K562 (cell line): ENCODE measurements at regions of chr21 and their contacts with region 1.

Region 1: GRCh38 chr21:45287438-45288391 is at the start of gene POFUT2:
- DNase-seq: peak; percentile 98 to 100 (median 100)
- ATAC-seq: peak; percentile 89
- H3K4me3 ChIP-seq: peak within 1 kb of the TSS; percentile 92
- H3K27ac ChIP-seq: peak within 1 kb of the TSS; percentile 68; the same call in 2 of the 3 replicates
- H3K4me1 ChIP-seq: peaks cover 12 to 36% of the 10 kb centered on the region in 2 experiments; a peak in 4 of 5 replicates
- H3K27me3 ChIP-seq: no peaks in the 10 kb centered on the region
- CTCF ChIP-seq: peak in 1 of 3 experiments; percentile 8; a peak in 1 of 6 replicates
- EP300 ChIP-seq: no peak
- POLR2A ChIP-seq: peak; percentile 83
- RAD21 ChIP-seq: no peak
- polyA plus RNA-seq, gene POFUT2: 1.1 to 2.9 TPM

Region 2: GRCh38 chr21:44865561-44866280 is 422.0 kb before region 1 on chr21:
- CTCF ChIA-PET with region 1: no interaction called
- POLR2A ChIA-PET with region 1: no interaction called
- in situ Hi-C with region 1: no loop called
- intact Hi-C with region 1: no loop called
- DNase-seq: no peak
- ATAC-seq: no peak
- H3K4me3 ChIP-seq: no peak overlapping the region
- H3K27ac ChIP-seq: no peak overlapping the region; the same call in 2 of the 3 replicates
- H3K4me1 ChIP-seq: peaks cover 31 to 41% of the 10 kb centered on the region in 2 experiments
- H3K27me3 ChIP-seq: no peaks in the 10 kb centered on the region
- CTCF ChIP-seq: no peak
- EP300 ChIP-seq: no peak
- POLR2A ChIP-seq: no peak
- RAD21 ChIP-seq: no peak

Region 3: DNA sequence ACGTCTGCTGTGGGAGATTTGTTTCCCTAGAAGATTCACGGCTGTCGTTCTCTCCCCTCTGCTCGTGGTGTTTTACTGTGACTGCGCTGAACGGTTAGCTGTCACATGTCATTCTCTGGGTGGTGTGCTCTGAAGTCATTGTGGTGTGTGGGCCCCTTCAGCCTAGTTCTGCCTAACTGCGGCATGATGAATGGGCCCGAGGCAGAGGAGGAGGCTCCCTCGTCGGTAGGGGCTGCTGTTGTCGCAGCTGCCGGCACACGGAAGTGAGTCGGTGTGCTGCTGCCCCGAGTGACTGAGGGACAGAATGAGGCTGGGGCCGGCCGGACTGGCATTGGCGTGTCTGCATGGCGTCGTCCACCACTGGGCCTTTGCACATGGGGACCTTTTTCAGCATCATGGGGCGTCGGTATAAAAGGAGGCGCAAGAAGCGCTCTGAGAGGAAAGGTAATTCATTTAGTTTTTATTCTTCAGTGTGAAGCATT is 135.4 kb before region 1 on chr21:
- CTCF ChIA-PET with region 1: no interaction called
- POLR2A ChIA-PET with region 1: no interaction called
- in situ Hi-C with region 1: loop called (anchors 5 kb)
- intact Hi-C with region 1: loop called (anchors 1 kb)
- DNase-seq: peak; percentile 75 to 92 (median 84)
- ATAC-seq: peak; percentile 99
- H3K4me3 ChIP-seq: no peak overlapping the region; the same call in 1 of the 2 replicates
- H3K27ac ChIP-seq: peak overlapping the region; percentile 30; the same call in 1 of the 3 replicates
- H3K4me1 ChIP-seq: peaks cover 15 to 22% of the 10 kb centered on the region in 2 experiments; a peak in 4 of 5 replicates
- H3K27me3 ChIP-seq: no peaks in the 10 kb centered on the region
- CTCF ChIP-seq: peak; percentile 97
- EP300 ChIP-seq: peak; percentile 55; the same call in 1 of the 2 replicates
- POLR2A ChIP-seq: peak; percentile 44; the same call in 1 of the 2 replicates
- RAD21 ChIP-seq: peak; percentile 90 to 97

Region 4: DNA sequence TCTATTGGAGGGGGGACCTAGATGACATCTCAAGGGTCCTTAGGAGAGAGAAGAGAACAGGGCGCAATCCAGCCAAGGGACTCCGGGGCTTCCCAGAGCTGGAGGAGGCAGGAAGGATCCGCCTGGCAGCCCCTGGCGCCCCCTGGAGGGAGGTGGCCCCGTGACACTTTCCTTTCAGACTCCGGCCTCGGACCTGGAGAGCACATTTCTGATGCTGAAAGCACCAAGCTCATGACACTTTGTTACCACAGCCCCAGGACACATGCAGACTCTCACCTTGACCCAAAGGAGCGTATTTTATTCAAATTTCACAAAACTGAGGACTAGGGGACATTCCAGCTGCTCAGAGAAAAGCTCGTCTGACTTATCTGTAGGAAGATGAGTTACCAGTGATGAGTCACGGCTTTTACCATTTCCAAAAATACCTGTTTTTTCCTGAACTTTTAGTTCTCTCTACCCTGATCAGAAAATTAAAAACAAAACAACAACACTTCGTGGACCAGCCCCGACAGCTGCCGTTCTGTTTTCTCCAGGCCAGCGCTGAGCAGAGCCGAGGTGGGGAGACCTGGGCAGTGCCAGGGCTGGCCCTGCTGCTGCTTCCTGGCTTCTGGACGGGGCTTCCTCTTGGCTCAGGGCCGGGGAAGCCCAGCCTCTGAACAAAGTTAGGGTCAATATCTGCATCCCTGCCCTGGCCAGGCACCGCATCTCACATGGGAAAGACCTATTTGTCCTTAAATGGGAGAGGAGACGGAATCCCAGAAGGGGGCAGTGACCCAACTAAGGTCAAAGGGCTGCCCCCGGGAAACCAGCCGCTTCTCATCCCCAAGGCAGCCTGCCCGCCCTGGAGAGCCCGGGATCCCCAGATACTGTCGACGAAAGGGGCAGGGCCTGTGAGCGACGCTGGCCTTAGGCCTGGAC is 21.6 kb after region 1 on chr21:
- CTCF ChIA-PET with region 1: interaction called, 3 read pairs
- POLR2A ChIA-PET with region 1: no interaction called
- in situ Hi-C with region 1: no loop called
- intact Hi-C with region 1: loop called (anchors 1 kb)
- DNase-seq: peak; percentile 78 to 82 (median 81)
- ATAC-seq: peak; percentile 89
- H3K4me3 ChIP-seq: no peak overlapping the region
- H3K27ac ChIP-seq: no peak overlapping the region
- H3K4me1 ChIP-seq: peaks cover 20 to 32% of the 10 kb centered on the region in 2 experiments; a peak in 4 of 5 replicates
- H3K27me3 ChIP-seq: peaks cover 13 to 66% of the 10 kb centered on the region in 2 experiments; a peak in 4 of 5 replicates
- CTCF ChIP-seq: peak; percentile 87 to 99 (median 90)
- EP300 ChIP-seq: no peak
- POLR2A ChIP-seq: no peak
- RAD21 ChIP-seq: peak; percentile 45 to 80

Region 5: GRCh38 chr21:45347712-45348499 is 60.2 kb after region 1 on chr21:
- CTCF ChIA-PET with region 1: no interaction called
- POLR2A ChIA-PET with region 1: no interaction called
- in situ Hi-C with region 1: no loop called
- intact Hi-C with region 1: no loop called
- DNase-seq: no peak
- ATAC-seq: no peak
- H3K4me3 ChIP-seq: no peak overlapping the region
- H3K27ac ChIP-seq: no peak overlapping the region
- H3K4me1 ChIP-seq: peaks cover 0 to 49% of the 10 kb centered on the region in 2 experiments; a peak in 3 of 5 replicates
- H3K27me3 ChIP-seq: peaks cover 33 to 64% of the 10 kb centered on the region in 2 experiments
- CTCF ChIP-seq: no peak
- EP300 ChIP-seq: no peak
- POLR2A ChIP-seq: no peak
- RAD21 ChIP-seq: no peak

Region 6: DNA sequence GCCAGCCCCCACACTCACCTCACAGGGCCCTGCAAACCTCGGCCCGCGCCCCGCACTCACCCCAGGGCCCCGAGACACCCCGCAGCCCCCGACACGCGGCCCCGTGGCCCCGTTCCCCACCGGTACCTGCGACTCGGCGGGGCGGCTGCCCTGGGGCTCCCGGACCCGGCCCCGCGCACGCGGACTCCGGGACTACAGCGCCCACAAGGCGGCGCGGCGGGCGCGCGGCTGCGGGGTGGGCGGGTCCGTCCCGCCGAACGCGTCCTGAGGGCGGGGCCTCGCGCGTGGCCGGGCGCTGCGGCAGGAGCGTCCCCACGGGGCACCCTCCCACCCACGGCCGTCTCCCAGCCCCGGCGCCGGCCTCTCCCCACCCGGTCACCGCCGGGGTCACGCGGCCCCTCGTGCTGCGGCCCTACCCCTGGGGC is 254.5 kb after region 1 on chr21 and contains the start of gene SLC19A1:
- CTCF ChIA-PET with region 1: no interaction called
- POLR2A ChIA-PET with region 1: no interaction called
- in situ Hi-C with region 1: no loop called
- intact Hi-C with region 1: loop called (anchors 5 kb)
- DNase-seq: peak; percentile 89 to 98 (median 98)
- ATAC-seq: peak; percentile 93
- H3K4me3 ChIP-seq: peak within 1 kb of the TSS; percentile 48
- H3K27ac ChIP-seq: peak within 1 kb of the TSS; percentile 54
- H3K4me1 ChIP-seq: peaks cover 7 to 68% of the 10 kb centered on the region in 2 experiments; a peak in 4 of 5 replicates
- H3K27me3 ChIP-seq: peaks cover 0 to 3% of the 10 kb centered on the region in 2 experiments; a peak in 4 of 5 replicates
- CTCF ChIP-seq: peak in 2 of 3 experiments; percentile 16 to 33; a peak in 2 of 6 replicates
- EP300 ChIP-seq: no peak
- POLR2A ChIP-seq: no peak
- RAD21 ChIP-seq: no peak
- polyA plus RNA-seq, gene SLC19A1: 0.65 to 2.3 TPM

Region 7: DNA sequence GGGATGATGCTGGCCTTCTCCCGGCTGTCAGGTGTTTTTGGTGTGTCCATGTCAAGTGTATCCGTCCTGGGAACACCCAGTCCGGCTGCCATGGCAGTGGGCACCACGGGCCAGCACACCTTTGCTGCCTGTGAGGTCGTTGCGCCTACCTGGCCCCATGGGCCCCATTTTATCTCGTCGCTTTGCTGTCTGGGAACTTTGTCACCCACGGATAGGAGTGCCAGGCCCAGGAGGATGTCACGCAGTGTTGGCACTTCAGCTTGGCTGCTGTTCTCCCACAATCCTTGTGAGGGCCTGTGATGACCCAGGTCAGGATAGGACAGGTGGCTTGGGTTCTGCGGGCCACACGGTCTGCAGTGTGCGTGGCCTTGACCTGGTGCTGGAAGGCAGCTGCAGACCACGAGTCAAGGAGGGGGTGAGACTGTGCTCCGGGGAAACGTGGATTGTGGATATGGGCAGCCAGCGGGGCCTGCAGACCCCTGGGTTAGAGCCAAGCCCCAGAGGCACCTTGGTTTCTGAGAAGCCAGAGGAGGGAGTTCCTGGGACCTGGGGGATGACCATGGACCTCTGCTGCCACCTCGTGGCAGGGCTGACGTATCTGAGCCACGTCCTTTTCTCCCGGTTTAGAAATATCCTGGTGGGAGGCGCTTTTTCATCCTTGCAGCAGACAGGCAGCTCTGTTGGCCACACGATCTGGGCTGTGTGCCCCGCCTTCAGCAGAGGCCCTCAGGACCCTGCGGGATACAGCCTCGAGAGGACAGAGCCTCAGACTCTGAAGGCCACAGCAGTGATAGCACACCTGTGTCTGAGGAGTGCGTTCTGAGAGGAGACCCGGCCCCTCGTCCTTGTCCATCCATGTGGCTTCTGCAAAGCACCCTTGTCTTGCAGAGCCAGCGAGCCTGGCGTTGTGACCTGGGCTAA is 532.7 kb after region 1 on chr21:
- CTCF ChIA-PET with region 1: interaction called, 3 read pairs
- POLR2A ChIA-PET with region 1: interaction called, 3 read pairs
- in situ Hi-C with region 1: no loop called
- intact Hi-C with region 1: loop called (anchors 1 kb)
- DNase-seq: peak; percentile 91 to 96 (median 95)
- ATAC-seq: peak; percentile 96
- H3K4me3 ChIP-seq: no peak overlapping the region
- H3K27ac ChIP-seq: no peak overlapping the region
- H3K4me1 ChIP-seq: peaks cover 0 to 7% of the 10 kb centered on the region in 2 experiments; a peak in 2 of 5 replicates
- H3K27me3 ChIP-seq: peaks cover 29 to 67% of the 10 kb centered on the region in 2 experiments
- CTCF ChIP-seq: peak; percentile 94 to 98 (median 95)
- EP300 ChIP-seq: no peak
- POLR2A ChIP-seq: no peak
- RAD21 ChIP-seq: peak; percentile 84 to 95